Ascending aorta (tissue), 2 donors: ENCODE measurements at regions of chr3 and their contacts with region 1.

Region 1: DNA sequence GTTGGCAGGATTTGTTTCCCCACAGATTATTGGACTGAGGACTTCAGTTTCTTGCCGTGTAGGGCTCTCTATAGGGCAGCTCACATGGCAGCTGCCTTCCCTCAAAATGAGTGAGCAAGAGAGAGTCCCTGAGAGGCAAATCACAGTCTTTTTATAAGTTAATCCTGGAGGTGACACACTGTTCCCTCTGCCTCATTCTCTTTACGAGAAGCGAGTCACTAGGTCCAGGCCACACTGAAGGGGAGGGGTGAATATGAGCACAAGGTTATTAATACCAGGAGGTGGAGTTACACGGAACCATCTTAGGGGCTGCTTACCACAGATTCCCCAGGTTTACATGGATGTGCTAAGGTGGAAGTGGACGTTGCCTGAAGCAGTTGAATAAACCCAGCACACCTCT is 77.0 kb downstream of the LPP start:
- DNase-seq: peak; percentile 47 to 84
- H3K4me3 ChIP-seq: peak overlapping the region in 1 of 2 donors; percentile 2
- H3K27ac ChIP-seq: peak overlapping the region; percentile 82 to 89
- H3K4me1 ChIP-seq: peaks cover 7 to 80% of the 10 kb centered on the region in 2 donors
- H3K27me3 ChIP-seq: no peaks in the 10 kb centered on the region
- CTCF ChIP-seq: no peak

Region 2: DNA sequence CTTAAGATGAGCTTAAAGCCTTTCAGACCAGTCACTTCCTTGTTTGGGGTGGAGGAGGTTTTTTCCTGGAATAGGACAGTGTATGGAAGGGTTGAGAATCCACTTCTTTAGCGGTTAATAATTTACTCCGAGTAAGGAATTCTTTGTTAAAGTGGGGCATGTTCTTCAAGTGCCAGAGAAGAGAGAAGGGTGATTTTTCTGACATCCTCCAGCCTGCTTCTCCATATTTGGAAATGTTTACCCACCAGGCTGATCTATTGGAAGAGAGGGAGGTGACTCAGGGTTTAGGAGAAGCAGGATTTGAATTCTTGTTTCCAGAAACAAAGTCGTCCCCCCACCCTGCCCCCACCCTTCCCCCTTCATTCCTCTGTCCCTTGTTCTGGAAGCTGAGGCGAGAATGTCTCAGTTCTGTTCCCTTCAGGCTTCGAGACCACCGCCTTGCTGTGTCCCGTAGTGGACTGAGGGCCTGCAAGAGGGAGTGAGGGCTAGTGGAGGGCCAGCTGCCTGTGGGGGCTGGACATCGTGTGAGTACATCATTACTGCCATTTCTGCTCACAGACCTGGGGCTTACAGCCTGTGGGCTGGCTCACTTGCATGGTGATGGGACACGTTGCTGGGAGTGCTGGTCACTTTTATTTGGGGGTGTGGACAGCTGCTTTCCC is 18.5 kb before region 1 on chr3:
- intact Hi-C with region 1: loop called (anchors 2 kb)
- DNase-seq: peak in 1 of 2 donors; percentile 82
- H3K4me3 ChIP-seq: peak overlapping the region; percentile 49 to 63
- H3K27ac ChIP-seq: peak overlapping the region; percentile 92 to 96
- H3K4me1 ChIP-seq: peaks cover 17 to 33% of the 10 kb centered on the region in 2 donors
- H3K27me3 ChIP-seq: no peaks in the 10 kb centered on the region
- CTCF ChIP-seq: no peak